ENCODE measurements at regions of chr17 and their contacts with region 1.

Region 1: DNA sequence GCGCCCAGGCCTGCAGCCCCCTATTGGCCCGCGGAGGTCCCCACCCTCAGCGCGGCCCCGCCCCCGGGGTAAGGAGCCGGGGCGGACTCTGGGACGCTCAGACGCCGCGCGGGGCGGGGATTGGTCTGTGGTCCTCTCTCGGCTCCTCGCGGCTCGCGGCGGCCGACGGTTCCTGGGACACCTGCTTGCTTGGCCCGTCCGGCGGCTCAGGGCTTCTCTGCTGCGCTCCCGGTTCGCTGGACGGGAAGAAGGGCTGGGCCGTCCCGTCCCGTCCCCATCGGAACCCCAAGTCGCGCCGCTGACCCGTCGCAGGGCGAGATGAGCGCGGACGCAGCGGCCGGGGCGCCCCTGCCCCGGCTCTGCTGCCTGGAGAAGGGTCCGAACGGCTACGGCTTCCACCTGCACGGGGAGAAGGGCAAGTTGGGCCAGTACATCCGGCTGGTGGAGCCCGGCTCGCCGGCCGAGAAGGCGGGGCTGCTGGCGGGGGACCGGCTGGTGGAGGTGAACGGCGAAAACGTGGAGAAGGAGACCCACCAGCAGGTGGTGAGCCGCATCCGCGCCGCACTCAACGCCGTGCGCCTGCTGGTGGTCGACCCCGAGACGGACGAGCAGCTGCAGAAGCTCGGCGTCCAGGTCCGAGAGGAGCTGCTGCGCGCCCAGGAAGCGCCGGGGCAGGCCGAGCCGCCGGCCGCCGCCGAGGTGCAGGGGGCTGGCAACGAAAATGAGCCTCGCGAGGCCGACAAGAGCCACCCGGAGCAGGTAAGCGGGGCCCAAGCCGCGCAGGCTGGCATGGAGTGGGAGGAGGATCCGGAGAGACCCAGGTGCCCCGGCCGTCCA is at the start of gene NHERF1:
- DNase-seq: peak; percentile 97
- H3K4me3 ChIP-seq: peak within 1 kb of the TSS; percentile 69 to 88 (median 74)
- H3K27ac ChIP-seq: peak within 1 kb of the TSS; percentile 72 to 86 (median 79)
- H3K4me1 ChIP-seq: peaks cover 34 to 66% (median 60%) of the 10 kb centered on the region in 4 donors
- H3K27me3 ChIP-seq: peaks cover 0 to 36% (median 0%) of the 10 kb centered on the region in 4 donors
- CTCF ChIP-seq: peak in 2 of 3 experiments; percentile 2 to 4
- EP300 ChIP-seq: no peak
- POLR2A ChIP-seq: peak; percentile 91
- total RNA-seq, gene NHERF1: 8.9 to 12.1 (median 11.0) TPM

Region 2: DNA sequence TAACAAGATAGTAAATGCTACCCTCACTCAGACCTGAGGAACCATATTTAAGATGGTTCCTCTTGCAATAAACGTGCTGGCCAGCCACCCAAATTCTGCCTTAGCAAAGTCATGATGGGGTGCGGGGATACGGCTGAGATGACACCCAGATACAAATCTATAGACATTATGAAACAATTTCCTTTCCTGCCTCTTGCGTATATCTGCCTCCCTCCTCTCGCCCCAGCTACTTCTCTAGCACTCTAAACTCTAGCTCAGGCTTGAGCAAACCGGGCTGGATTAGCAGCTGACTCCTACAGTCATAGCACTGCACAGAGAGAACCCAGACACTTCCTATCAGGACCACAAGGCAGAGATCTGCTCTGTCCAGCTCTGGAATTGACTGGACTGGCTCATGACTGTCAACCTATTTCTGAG is 58.3 kb before region 1 on chr17:
- intact Hi-C with region 1: no loop called
- DNase-seq: no peak
- H3K4me3 ChIP-seq: no peak overlapping the region
- H3K27ac ChIP-seq: no peak overlapping the region
- H3K4me1 ChIP-seq: no peaks in the 10 kb centered on the region
- H3K27me3 ChIP-seq: peaks cover 0 to 16% (median 0%) of the 10 kb centered on the region in 4 donors
- CTCF ChIP-seq: no peak
- EP300 ChIP-seq: no peak
- POLR2A ChIP-seq: no peak

Region 3: DNA sequence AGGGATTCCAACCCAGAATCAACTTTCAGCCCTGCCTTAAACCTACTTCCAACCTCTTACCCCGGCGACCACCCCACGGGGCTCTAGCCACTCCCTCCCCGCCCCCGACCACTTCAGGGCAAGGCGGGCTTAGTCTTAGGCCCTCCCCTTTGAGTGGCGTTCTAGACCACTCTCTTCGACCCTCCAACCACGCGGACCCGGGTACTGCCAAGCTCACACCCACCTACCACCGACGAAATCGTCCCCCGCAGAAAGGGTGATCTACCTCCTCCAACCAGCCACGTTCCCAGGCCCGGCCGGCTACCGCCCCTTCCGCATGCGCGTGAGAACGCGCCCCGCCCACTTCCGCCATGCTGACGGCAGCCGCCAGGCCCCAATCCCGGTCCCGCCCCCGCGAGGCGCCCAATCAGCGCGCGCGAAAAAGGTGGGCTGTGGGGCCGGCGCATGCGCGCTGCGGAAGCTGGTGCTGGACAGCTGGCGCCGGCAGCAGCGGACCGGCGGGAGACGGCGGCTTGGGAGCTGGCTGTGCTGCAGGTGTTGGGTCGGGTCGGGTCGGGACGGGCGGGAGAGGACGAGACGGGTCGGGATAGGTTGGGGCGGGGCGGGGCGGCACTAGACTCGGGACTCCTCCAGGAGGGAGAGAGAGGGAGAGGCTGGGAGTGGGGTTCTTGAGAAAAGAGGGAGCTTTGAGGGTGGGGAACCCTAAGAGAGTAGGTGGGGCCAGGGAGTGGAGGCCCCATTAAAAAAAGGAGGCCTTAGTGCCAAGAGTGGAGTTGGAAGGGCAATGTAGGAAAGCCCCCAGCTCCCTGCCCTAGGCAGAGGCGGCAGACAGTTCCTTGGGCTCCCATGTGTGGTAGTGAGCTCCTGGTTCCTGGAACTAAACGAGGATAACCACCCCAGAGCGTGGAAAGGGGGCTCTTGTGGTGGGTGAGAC is 27.6 kb after region 1 on chr17 and contains the start of gene NAT9:
- intact Hi-C with region 1: loop called (anchors 2 kb)
- DNase-seq: peak; percentile 99
- H3K4me3 ChIP-seq: peak within 1 kb of the TSS; percentile 71 to 97 (median 80)
- H3K27ac ChIP-seq: peak within 1 kb of the TSS; percentile 58 to 83 (median 74)
- H3K4me1 ChIP-seq: peaks cover 17 to 54% (median 31%) of the 10 kb centered on the region in 4 donors
- H3K27me3 ChIP-seq: no peaks in the 10 kb centered on the region
- CTCF ChIP-seq: peak in 1 of 3 experiments; percentile 32
- EP300 ChIP-seq: no peak
- POLR2A ChIP-seq: no peak
- total RNA-seq, gene NAT9: 10.4 to 22.4 (median 17.7) TPM

Region 4: DNA sequence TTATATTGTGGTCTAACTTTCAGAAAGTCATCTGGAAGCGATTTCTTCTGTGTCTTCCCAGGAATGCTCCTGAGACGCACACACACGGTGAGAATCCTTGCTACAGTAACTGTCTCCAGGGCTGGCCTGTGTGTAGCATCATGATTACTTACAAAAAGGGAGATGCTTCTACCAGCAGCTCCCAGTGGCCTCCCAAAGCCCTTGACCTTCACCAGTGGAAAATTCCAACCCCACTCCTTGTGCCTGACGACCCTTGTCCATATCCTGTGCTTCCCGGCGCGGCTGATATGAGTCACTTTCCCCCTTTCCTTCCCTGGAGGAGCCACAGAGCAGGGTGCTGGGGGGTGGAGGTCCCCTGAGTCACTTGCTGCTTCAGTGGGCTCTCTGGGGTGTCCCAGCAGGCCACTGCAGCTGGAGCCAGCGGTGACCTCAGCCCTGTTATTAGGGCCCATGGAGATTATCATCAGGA is 49.5 kb after region 1 on chr17:
- intact Hi-C with region 1: no loop called
- DNase-seq: no peak
- H3K4me3 ChIP-seq: no peak overlapping the region
- H3K27ac ChIP-seq: no peak overlapping the region
- H3K4me1 ChIP-seq: no peaks in the 10 kb centered on the region
- H3K27me3 ChIP-seq: no peaks in the 10 kb centered on the region
- CTCF ChIP-seq: no peak
- EP300 ChIP-seq: no peak
- POLR2A ChIP-seq: no peak

Region 5: DNA sequence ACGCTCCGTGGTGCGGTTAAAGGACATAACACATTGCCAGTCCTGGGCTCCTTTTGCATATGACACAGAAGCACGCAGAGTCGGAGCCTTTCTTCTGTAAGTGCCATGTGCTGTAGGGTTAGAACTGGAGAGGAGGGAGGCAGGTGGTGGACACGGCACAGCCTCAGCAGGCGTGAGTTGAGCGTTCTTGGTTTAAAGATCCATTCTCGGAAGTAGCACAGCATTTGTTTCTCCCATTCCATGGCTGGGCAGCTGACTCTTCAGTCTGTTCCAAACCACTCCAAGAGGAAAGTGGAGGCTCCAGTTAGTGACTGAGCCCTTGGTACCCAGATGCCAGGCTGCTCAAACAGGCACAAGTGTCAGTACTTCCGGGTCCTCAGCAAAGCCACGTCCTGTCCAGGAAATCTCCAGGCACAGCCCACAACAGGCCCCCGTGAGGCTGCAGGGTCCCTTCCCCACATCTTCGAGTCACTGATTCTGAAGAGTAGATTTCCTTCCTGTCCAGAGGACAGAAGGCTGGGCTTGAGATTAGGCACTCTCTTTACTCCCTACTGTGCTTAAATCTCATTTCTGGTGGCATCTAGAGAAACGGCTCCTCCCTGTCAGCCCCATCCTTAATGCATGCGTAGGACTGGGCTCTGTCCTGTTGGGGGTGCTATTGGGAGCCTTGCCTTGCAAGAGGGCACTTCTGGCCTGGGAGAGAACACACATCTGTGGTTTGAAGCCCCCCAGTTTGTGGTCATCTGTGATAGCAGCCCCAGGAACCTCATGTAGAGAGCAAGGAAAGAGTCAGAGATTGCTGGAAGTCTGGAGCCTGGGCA is 67.0 kb after region 1 on chr17:
- intact Hi-C with region 1: no loop called
- DNase-seq: no peak
- H3K4me3 ChIP-seq: no peak overlapping the region
- H3K27ac ChIP-seq: no peak overlapping the region
- H3K4me1 ChIP-seq: peaks cover 10 to 20% (median 17%) of the 10 kb centered on the region in 4 donors
- H3K27me3 ChIP-seq: no peaks in the 10 kb centered on the region
- CTCF ChIP-seq: no peak
- EP300 ChIP-seq: no peak
- POLR2A ChIP-seq: no peak

Region 6: GRCh38 chr17:74864866-74865395 is 116.2 kb after region 1 on chr17:
- intact Hi-C with region 1: loop called (anchors 2 kb)
- DNase-seq: peak; percentile 96
- H3K4me3 ChIP-seq: no peak overlapping the region
- H3K27ac ChIP-seq: no peak overlapping the region
- H3K4me1 ChIP-seq: peaks cover 21 to 32% (median 26%) of the 10 kb centered on the region in 4 donors
- H3K27me3 ChIP-seq: peaks cover 0 to 38% (median 15%) of the 10 kb centered on the region in 4 donors
- CTCF ChIP-seq: peak; percentile 90 to 97 (median 96)
- EP300 ChIP-seq: no peak
- POLR2A ChIP-seq: no peak

Measured in esophagus muscularis mucosa (tissue), 4 donors.